ENCODE measurements at regions of chr11 and their contacts with region 1.

Region 1: GRCh38 chr11:86041975-86042378 is 26.9 kb downstream of the PICALM start:
- DNase-seq: peak; percentile 66
- H3K4me3 ChIP-seq: no peak overlapping the region
- H3K27ac ChIP-seq: peak overlapping the region; percentile 37 to 66 (median 53)
- H3K4me1 ChIP-seq: peaks cover 11 to 57% (median 38%) of the 10 kb centered on the region in 4 donors
- H3K27me3 ChIP-seq: no peaks in the 10 kb centered on the region
- CTCF ChIP-seq: peak; percentile 85 to 97 (median 93)
- EP300 ChIP-seq: no peak
- POLR2A ChIP-seq: no peak

Region 2: GRCh38 chr11:85663753-85664614 is 378.0 kb before region 1 on chr11:
- in situ Hi-C with region 1: no loop called
- intact Hi-C with region 1: no loop called
- DNase-seq: peak; percentile 87
- H3K4me3 ChIP-seq: peak overlapping the region; percentile 61 to 93 (median 88)
- H3K27ac ChIP-seq: peak overlapping the region; percentile 94 to 100 (median 98)
- H3K4me1 ChIP-seq: peaks cover 13 to 53% (median 39%) of the 10 kb centered on the region in 4 donors
- H3K27me3 ChIP-seq: no peaks in the 10 kb centered on the region
- CTCF ChIP-seq: peak; percentile 46 to 82 (median 61)
- EP300 ChIP-seq: no peak
- POLR2A ChIP-seq: no peak

Region 3: DNA sequence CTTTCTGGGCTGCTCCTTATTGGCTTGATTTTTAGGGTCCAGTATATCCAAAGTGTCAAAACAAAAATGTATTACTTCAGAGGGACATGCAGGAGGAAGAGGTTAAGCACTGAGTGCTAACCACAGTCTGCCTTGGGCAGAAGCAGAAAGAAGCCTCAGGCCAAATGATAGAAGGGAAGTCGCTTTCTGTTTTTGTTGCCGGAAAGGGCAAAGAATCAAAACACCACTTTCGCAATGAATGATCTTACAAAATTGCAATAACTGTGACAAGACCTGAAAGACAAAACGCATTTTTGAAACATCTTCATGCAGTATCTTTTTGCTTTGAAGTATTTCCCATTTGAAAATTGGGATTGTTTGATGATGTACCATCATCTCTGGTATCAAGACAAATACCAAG is 97.0 kb after region 1 on chr11:
- in situ Hi-C with region 1: no loop called
- intact Hi-C with region 1: no loop called
- DNase-seq: no peak
- H3K4me3 ChIP-seq: no peak overlapping the region
- H3K27ac ChIP-seq: peak overlapping the region in 3 of 4 donors; percentile 10 to 23 (median 14)
- H3K4me1 ChIP-seq: peaks cover 0 to 17% (median 7%) of the 10 kb centered on the region in 4 donors
- H3K27me3 ChIP-seq: no peaks in the 10 kb centered on the region
- CTCF ChIP-seq: no peak
- EP300 ChIP-seq: no peak
- POLR2A ChIP-seq: no peak

Region 4: DNA sequence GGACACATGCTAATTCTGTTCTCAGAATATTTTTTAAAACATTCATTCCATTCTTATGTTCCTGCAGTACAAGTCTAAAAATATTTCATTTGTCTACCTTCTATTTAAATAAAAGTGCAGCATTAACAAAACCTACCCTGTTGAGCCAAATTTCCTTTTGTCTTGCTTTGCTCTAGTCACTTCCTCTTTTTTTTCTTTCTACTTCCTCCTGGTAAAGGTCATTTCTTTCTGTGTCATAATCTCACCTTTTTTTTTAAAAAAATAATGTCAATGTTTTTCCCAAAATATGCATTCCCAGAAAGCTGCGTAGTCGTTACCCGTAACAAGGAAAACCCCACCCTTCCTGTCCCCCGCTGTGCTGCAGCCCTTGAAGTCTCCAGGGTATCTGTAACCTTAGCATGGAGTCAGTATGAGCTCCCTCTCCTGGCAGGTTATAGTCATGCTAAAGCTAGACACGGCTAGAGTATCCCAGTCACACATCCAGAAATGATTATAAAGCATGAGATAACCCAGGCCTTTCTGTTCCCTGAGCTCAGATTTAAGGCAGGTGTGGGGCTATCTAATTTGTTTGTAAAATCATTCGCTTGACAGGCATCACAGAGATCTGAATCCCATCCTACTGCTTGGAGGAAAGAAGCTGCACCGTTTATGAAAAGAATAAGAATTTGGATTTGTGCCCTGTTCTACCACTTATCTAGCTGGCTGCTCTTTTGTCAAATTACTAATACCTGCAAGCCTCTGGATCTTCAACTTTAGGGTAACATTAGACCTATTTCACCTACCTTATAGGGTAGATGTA is 151.5 kb after region 1 on chr11:
- in situ Hi-C with region 1: loop called (anchors 10 kb)
- intact Hi-C with region 1: loop called (anchors 5 kb)
- DNase-seq: peak; percentile 64
- H3K4me3 ChIP-seq: peak overlapping the region in 1 of 4 donors; percentile 35
- H3K27ac ChIP-seq: peak overlapping the region in 3 of 4 donors; percentile 24 to 37 (median 27)
- H3K4me1 ChIP-seq: peaks cover 5 to 32% (median 10%) of the 10 kb centered on the region in 4 donors
- H3K27me3 ChIP-seq: no peaks in the 10 kb centered on the region
- CTCF ChIP-seq: peak; percentile 63 to 89 (median 71)
- EP300 ChIP-seq: peak; percentile 12
- POLR2A ChIP-seq: no peak

Measured in transverse colon (tissue), 4 donors.